Transverse colon (tissue), 4 donors: ENCODE measurements at regions of chr12 and their contacts with region 1.

Region 1: GRCh38 chr12:9741726-9742125 is 8.8 kb upstream of the CLECL1 start:
- DNase-seq: peak; percentile 67
- H3K4me3 ChIP-seq: no peak overlapping the region
- H3K27ac ChIP-seq: peak overlapping the region in 3 of 4 donors; percentile 33 to 48 (median 45)
- H3K4me1 ChIP-seq: peaks cover 0 to 19% (median 4%) of the 10 kb centered on the region in 4 donors
- H3K27me3 ChIP-seq: no peaks in the 10 kb centered on the region
- CTCF ChIP-seq: no peak
- EP300 ChIP-seq: no peak
- POLR2A ChIP-seq: no peak

Region 2: GRCh38 chr12:9797722-9798619 is 56.2 kb after region 1 on chr12:
- in situ Hi-C with region 1: loop called in 1 of 4 experiments (anchors 5 kb)
- intact Hi-C with region 1: no loop called
- DNase-seq: peak; percentile 64
- H3K4me3 ChIP-seq: no peak overlapping the region
- H3K27ac ChIP-seq: no peak overlapping the region
- H3K4me1 ChIP-seq: peaks cover 0 to 6% (median 0%) of the 10 kb centered on the region in 4 donors
- H3K27me3 ChIP-seq: no peaks in the 10 kb centered on the region
- CTCF ChIP-seq: peak; percentile 29 to 63 (median 47)
- EP300 ChIP-seq: no peak
- POLR2A ChIP-seq: no peak